ENCODE measurements at regions of chr20 and their contacts with region 1.

Region 1: DNA sequence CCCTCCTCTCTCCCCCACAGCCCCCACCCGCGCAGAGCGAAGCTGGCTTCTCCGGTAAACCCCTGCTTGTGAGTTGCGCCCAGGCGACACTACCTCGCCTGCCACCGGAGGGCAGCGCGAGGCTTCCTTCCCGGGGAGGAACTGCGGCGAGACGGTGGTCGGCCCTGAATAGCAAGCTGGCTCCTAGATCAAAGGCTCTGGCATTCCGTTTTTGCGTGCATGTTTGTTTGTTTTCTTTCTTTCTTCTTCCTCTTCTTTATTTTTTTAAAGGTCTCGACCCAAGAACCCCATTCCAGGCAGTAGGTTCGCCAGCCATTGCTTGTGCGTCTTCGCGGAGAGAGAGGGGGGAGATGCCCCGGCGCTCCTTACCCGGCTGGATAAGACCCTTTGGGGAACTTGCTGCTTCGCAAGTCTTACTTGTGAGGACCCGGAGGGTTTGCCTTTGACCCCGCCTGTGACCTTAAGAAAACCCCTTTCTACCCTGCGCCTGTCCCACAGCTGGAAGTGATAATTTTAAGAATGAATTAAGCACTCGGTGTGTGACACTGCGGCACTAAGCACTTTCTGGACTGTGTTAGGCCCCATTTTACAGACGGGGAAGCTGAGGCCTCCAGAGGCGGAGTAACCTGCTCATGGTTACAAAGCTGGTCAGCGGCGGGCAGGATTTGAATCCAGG is 92.7 kb upstream of the SIRPA start:
- DNase-seq: peak; percentile 89
- ATAC-seq: peak; percentile 67
- H3K4me3 ChIP-seq: peak overlapping the region; percentile 46 to 71 (median 67)
- H3K4me3 Mint-ChIP-seq: peak overlapping the region; percentile 89
- H3K27ac ChIP-seq: peak overlapping the region; percentile 85
- H3K27ac Mint-ChIP-seq: peak overlapping the region; percentile 88
- H3K4me1 ChIP-seq: peaks cover 22 to 28% of the 10 kb centered on the region in 2 donors
- H3K4me1 Mint-ChIP-seq: peaks cover 26% of the 10 kb centered on the region
- H3K27me3 ChIP-seq: no peaks in the 10 kb centered on the region
- H3K27me3 Mint-ChIP-seq: no peaks in the 10 kb centered on the region
- CTCF ChIP-seq: peak; percentile 84

Region 2: DNA sequence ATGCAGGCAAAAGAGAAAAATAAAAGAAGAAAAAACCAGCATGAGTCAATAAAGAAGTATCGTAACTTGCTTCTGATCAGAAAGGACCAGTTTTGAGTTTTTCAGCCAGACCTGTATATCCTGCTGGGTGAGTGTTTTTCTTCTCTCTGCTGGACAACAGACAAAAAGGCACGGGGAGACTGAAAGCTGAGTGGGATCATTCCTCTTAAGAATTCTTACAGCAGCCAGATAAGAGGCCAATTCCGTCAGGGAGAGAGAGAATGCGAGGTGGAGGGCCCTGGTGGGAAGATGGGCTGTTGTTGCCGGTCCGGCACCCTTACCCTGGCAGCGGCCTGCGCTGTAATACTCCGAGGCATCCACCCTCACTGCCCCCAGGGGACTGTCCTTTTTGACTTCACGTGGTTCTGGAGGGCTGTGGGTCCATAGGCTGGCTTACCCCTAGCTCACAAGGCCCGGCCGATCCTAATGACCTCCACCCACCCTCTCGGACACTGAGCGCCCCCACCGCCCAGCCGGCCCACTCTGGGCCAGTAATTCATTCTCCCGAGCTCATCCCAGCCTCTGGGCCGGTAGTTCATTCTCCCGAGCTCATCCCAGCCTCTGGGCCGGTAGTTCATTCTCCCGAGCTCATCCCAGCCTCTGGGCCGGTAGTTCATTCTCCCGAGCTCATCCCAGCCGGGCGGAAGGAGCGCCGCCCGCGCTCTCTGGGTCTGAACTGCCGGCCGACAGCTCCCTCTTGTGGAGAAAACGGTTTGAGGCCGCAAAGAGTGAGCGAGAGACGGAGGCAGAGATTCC is 25.6 kb before region 1 on chr20:
- CTCF ChIA-PET with region 1: interaction called, 24 read pairs
- POLR2A ChIA-PET with region 1: no interaction called
- intact Hi-C with region 1: loop called (anchors 2 kb)
- DNase-seq: peak; percentile 87
- ATAC-seq: peak; percentile 92
- H3K4me3 ChIP-seq: peak overlapping the region in 4 of 5 experiments; percentile 64 to 95 (median 74)
- H3K4me3 Mint-ChIP-seq: peak overlapping the region; percentile 93
- H3K27ac ChIP-seq: peak overlapping the region; percentile 32 to 66
- H3K27ac Mint-ChIP-seq: peak overlapping the region; percentile 65
- H3K4me1 ChIP-seq: peaks cover 11 to 13% of the 10 kb centered on the region in 2 donors
- H3K4me1 Mint-ChIP-seq: peaks cover 16% of the 10 kb centered on the region
- H3K27me3 ChIP-seq: peaks cover 0 to 10% (median 2%) of the 10 kb centered on the region in 4 experiments
- H3K27me3 Mint-ChIP-seq: peaks cover 16% of the 10 kb centered on the region
- CTCF ChIP-seq: peak; percentile 78

Region 3: DNA sequence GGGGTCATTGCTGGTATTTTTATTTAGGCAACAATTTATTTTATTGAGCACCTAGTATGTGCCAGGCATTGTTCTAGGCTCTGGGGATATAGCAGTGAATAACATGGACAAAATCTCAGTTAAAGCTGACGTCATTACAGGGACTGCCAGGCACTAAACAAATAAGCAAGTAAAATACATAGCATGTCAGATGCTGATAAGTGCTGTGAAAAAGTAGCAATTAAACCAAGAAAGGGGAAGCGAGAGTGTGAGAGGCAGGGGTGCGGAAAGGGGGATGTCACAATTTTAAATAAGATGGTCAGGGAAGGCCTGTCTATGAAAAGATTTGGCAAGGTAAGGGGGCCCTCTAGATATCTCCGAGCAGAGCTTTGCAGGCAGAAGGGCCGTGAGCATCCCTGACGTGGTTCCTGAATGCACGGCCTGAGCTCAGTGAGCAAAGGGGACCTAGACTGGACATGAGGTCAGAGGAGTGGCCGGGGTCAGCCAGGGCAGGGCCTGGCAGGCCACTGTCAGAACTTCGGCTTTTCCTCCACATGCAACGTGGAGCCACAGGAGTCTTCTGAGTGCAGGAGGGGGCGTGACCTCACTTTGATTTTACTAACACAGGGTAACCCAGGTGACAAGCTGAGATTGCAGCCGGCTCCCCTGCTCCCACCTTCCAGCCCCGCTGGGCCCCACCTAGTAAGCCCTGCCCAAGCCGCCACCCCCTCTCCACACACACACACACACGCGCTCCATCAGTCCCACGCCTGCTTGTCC is 68.4 kb after region 1 on chr20:
- CTCF ChIA-PET with region 1: interaction called, 36 read pairs
- POLR2A ChIA-PET with region 1: interaction called, 18 read pairs
- intact Hi-C with region 1: loop called (anchors 1 kb)
- DNase-seq: peak; percentile 91
- ATAC-seq: peak; percentile 79
- H3K4me3 ChIP-seq: no peak overlapping the region
- H3K4me3 Mint-ChIP-seq: peak overlapping the region; percentile 48
- H3K27ac ChIP-seq: peak overlapping the region; percentile 46 to 66
- H3K27ac Mint-ChIP-seq: peak overlapping the region; percentile 83
- H3K4me1 ChIP-seq: peaks cover 52 to 53% of the 10 kb centered on the region in 2 donors
- H3K4me1 Mint-ChIP-seq: peaks cover 60% of the 10 kb centered on the region
- H3K27me3 ChIP-seq: peaks cover 0 to 18% (median 6%) of the 10 kb centered on the region in 4 experiments
- H3K27me3 Mint-ChIP-seq: peaks cover 6% of the 10 kb centered on the region
- CTCF ChIP-seq: no peak

Region 4: DNA sequence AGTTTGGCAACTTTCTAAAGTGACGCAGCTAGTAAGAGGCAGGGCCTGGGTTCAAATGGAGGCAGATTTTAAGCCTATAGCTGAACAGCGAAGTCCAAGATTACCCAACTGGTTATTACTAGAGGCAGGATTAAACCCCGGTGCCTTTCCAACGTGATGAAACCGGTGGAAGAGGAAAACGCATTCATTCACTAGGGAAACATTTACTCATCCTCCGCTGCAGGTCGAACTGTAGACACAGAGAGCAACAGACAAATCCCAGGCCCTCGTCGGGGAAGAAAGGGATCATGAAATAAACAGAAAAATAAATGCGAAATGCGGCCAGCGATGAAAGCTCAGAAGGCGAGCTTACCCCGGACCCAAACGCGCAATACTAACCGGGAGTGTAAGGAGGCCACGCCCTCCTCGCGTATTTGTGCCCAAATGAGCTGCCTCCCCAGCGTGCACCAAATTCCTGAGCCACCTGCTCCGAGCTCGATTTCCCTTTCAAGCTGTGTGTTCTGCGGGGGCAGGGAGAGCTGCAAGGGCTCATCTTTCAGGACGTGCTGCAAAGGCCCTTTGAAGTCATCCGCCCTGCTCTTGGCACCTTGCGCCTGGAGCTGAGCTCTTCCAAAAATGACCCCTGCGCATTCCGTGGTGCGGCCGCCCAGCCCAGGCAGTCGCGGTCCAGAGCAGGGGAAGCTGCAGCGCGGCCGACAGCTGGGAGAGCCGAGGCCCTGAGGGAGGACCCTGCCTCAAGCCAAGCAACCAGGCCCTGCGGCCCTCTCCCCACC is 144.4 kb after region 1 on chr20:
- CTCF ChIA-PET with region 1: interaction called, 29 read pairs
- POLR2A ChIA-PET with region 1: no interaction called
- intact Hi-C with region 1: no loop called
- DNase-seq: peak; percentile 40
- ATAC-seq: no peak
- H3K4me3 ChIP-seq: peak overlapping the region; percentile 25 to 46 (median 37)
- H3K4me3 Mint-ChIP-seq: peak overlapping the region; percentile 85
- H3K27ac ChIP-seq: no peak overlapping the region
- H3K27ac Mint-ChIP-seq: peak overlapping the region; percentile 63
- H3K4me1 ChIP-seq: peaks cover 12 to 19% of the 10 kb centered on the region in 2 donors
- H3K4me1 Mint-ChIP-seq: peaks cover 21% of the 10 kb centered on the region
- H3K27me3 ChIP-seq: peaks cover 0 to 19% (median 5%) of the 10 kb centered on the region in 4 experiments
- H3K27me3 Mint-ChIP-seq: peaks cover 15% of the 10 kb centered on the region
- CTCF ChIP-seq: no peak

Region 5: GRCh38 chr20:2005831-2006426 is 203.4 kb after region 1 on chr20:
- CTCF ChIA-PET with region 1: interaction called, 7 read pairs
- POLR2A ChIA-PET with region 1: no interaction called
- intact Hi-C with region 1: loop called (anchors 5 kb)
- DNase-seq: peak; percentile 77
- ATAC-seq: no peak
- H3K4me3 ChIP-seq: no peak overlapping the region
- H3K4me3 Mint-ChIP-seq: no peak overlapping the region
- H3K27ac ChIP-seq: no peak overlapping the region
- H3K27ac Mint-ChIP-seq: no peak overlapping the region
- H3K4me1 ChIP-seq: no peaks in the 10 kb centered on the region
- H3K4me1 Mint-ChIP-seq: no peaks in the 10 kb centered on the region
- H3K27me3 ChIP-seq: peaks cover 0 to 30% (median 11%) of the 10 kb centered on the region in 4 experiments
- H3K27me3 Mint-ChIP-seq: peaks cover 45% of the 10 kb centered on the region
- CTCF ChIP-seq: no peak

Region 6: GRCh38 chr20:2122936-2123335 is 320.4 kb after region 1 on chr20:
- CTCF ChIA-PET with region 1: interaction called, 13 read pairs
- POLR2A ChIA-PET with region 1: no interaction called
- intact Hi-C with region 1: no loop called
- DNase-seq: no peak
- ATAC-seq: no peak
- H3K4me3 ChIP-seq: no peak overlapping the region
- H3K4me3 Mint-ChIP-seq: no peak overlapping the region
- H3K27ac ChIP-seq: no peak overlapping the region
- H3K27ac Mint-ChIP-seq: peak overlapping the region; percentile 12
- H3K4me1 ChIP-seq: peaks cover 22% of the 10 kb centered on the region in 2 donors
- H3K4me1 Mint-ChIP-seq: peaks cover 72% of the 10 kb centered on the region
- H3K27me3 ChIP-seq: no peaks in the 10 kb centered on the region
- H3K27me3 Mint-ChIP-seq: no peaks in the 10 kb centered on the region
- CTCF ChIP-seq: no peak

Measured in B cell (primary cell).